ENCODE measurements at regions of chr6 and their contacts with region 1.

Region 1: DNA sequence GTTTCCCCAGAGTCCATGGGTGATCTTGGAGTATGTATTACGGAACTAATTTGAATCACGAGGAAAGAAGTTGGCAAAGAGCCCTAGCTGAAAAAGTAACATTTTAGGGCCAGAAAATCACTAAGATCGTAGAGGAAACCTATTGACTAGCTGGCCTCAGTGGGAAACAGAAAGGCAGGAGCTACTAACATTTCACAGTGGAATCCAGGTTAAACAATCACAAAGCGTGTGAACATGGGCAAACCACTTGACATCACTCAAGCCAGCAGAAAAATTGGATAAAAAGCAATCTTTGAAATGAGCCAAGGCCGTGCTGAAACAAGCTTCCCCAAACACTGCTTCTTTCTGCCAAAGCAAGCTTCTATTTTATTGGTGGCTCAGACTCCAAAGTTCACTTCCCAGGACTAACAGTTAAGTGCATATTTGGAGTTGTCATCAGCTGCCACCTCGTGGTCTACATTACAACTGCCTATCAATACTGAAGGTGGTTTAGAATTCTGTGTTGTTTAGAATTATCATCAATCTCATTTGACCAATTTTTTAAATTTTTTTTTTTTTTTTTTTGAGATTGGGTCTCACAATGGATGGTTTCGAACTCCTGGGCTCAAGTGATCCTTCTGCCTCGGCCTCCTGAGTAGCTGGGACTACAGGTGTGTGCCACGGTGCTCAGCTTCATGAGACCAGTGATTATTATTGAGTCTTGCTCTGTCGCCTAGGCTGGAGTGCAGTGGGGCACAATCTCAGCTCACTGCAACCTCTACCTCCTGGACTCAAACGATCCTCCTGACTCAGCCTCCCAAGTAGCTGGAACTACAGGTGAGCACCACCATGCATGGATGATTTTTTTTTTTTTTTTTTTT is 10.6 kb downstream of the RPS10 start:
- DNase-seq: peak; percentile 61 to 63
- ATAC-seq: peak; percentile 94

Region 2: DNA sequence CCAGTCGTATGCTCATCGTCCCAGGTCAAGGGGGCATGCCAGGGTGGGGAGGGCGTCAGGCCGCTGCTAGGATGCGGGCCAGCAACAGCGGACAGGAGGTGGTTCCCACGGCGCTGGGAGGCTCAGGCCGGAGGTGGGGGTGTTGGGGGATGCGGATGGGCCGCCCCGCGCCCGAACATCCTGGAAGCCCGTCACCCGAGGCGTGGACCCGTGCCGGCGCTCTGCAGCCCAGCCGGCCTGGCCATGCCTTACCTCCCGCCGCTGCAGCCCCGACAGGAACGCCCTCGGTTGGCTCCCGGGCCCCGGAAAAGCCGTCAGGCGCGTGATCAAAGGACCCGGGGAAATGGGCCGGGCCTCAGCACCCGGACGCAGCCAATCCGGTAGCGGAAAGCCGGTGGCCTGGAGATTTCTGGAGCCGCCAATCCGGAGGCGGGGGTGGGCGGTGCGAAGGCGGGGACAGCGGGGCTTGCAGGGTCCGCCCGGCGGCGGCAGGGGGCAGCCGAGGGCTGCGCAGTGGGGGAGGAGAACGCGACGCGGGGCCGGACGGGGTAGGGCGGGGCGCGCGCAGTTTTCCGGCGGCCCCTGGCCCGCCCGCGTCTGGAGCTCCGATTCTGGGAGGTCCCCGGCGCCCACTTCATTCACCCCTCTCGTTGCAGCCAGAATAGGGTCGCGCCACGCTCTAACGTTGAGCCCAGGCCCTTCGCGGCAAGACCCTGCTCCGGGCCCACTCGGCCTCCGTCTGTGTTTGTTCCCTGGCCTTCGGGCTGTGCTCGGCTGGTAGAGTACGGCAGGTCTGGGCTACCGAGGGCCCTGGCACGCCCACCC is 166.3 kb before region 1 on chr6 and contains the start of gene SMIM29:
- intact Hi-C with region 1: loop called (anchors 5 to 10 kb)
- DNase-seq: peak; percentile 96 to 97
- ATAC-seq: peak; percentile 94
- total RNA-seq, gene SMIM29: 8.2 to 11.5 TPM